ENCODE measurements at regions of chr12 and their contacts with region 1.

Region 1: GRCh38 chr12:55926738-55927587 is 731 bp downstream of the PYM1 start:
- DNase-seq: peak; percentile 77 to 97 (median 84)

Region 2: DNA sequence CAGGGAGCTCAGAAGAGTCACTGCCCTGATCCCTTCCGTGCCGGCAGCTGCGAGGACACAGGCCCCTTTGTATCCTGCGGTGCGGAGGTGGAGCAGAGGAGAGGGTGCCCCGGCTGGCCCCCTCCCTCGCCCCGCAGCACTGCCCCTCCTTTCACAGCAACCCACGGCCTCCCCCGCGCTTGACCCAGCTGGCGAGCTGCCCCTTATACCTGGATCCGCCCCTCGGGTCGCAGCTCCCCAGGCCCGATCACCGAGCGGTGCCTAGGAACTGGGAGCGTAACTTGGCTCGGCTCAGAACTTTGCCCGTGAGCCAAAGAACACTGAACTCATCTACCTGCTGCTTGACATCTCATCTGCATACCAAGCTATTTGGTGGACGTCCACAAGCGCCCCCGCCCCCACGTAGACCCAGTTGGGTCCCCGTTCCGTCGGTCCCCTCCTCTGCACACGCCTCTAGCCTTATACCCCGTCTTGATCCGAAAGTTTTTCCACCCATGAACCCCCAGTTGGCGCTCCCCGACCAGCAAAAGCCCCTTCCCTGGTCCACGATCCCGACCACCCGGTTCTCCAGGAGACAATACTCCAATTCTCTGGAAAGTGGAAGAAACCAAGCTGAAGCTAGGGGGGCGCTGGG is 96.9 kb before region 1 on chr12:
- intact Hi-C with region 1: loop called (anchors 1 kb)
- DNase-seq: peak; percentile 48 to 93 (median 60)

Region 3: DNA sequence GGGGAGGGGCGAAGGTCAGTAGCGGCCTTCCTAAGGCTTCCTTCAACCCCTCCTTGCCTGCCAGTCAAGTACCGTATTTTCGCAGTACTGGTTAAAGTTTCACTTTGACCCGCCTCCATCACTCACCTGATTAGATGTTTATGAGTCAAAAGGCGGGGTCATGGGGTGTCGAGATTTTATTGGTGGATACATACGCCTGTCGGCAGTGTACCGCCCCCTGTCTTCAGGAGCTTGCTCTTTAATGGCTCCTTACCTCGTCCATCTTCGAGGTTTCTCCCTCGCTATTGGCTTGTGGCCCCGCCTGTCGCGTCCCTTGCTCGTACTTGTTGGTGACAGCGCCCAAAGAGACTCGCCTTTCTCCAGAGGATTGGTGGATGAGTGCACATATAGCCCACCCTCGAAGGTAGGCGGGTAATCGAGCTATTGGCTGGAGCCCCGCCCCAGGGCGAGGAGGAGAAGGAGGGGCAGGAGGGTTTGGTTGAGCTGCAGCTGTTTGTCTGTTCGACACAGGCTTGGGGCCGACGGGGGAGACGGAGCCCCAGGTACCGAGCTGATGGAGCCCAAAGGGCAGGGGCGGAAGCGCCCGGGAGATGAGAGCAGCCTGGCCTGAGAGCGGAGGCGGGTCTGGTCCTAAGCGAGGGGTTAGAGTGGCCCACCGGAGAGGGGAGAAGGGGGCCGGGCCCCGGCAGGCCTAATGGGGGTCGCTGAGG is 46.8 kb after region 1 on chr12 and contains the start of gene RAB5B:
- intact Hi-C with region 1: loop called (anchors 2 kb)
- DNase-seq: peak; percentile 97 to 100 (median 99)

Measured in posterior cingulate gyrus (tissue), 11 donors.